ENCODE measurements at regions of chr9 and their contacts with region 1.

Region 1: GRCh38 chr9:132406554-132407122 is at the start of gene TTF1:
- DNase-seq: peak; percentile 91 to 95 (median 94)
- ATAC-seq: peak; percentile 74 to 83 (median 77)
- H3K4me3 ChIP-seq: peak within 1 kb of the TSS; percentile 49 to 99 (median 80)
- H3K27ac ChIP-seq: peak within 1 kb of the TSS; percentile 37 to 91 (median 74)
- H3K4me1 ChIP-seq: peaks cover 0 to 72% (median 44%) of the 10 kb centered on the region in 12 donors
- H3K27me3 ChIP-seq: peaks cover 0 to 27% (median 13%) of the 10 kb centered on the region in 9 donors
- CTCF ChIP-seq: no peak
- POLR2A ChIP-seq: peak in 1 of 2 donors; percentile 40
- total RNA-seq, gene TTF1: 13.0 to 20.3 (median 16.5) TPM

Region 2: DNA sequence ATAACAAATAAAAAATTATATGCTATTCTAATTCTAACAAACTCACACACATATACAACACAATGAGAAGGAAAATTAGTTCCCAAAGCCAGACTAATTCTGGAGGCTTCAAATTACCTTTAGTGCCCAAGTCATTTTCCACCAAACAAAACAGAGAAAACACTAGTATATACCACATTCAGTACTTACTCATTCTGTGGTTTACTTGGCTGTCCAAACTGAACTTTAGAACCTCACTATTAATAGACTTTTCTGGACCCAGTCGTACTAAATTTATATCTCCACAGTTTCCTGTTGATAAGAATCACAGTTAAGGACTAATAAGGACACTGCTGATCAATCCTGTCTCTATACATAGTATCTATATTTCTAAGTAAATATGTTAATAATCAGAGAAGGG is 118.3 kb before region 1 on chr9:
- intact Hi-C with region 1: no loop called
- DNase-seq: no peak
- ATAC-seq: no peak
- H3K4me3 ChIP-seq: no peak overlapping the region
- H3K27ac ChIP-seq: peak overlapping the region in 4 of 12 donors; percentile 4 to 44 (median 7)
- H3K4me1 ChIP-seq: peaks cover 0 to 21% (median 15%) of the 10 kb centered on the region in 12 donors
- H3K27me3 ChIP-seq: no peaks in the 10 kb centered on the region
- CTCF ChIP-seq: no peak
- POLR2A ChIP-seq: no peak

Region 3: GRCh38 chr9:132354637-132355355 is 51.8 kb before region 1 on chr9 and contains the start of gene SETX:
- intact Hi-C with region 1: loop called in 2 of 10 experiments (anchors 5 to 10 kb)
- DNase-seq: peak; percentile 98 to 99 (median 98)
- ATAC-seq: peak; percentile 97 to 99 (median 98)
- H3K4me3 ChIP-seq: peak within 1 kb of the TSS; percentile 67 to 100 (median 92)
- H3K27ac ChIP-seq: peak within 1 kb of the TSS; percentile 67 to 99 (median 94)
- H3K4me1 ChIP-seq: peaks cover 3 to 44% (median 36%) of the 10 kb centered on the region in 12 donors
- H3K27me3 ChIP-seq: no peaks in the 10 kb centered on the region
- CTCF ChIP-seq: peak in 3 of 12 donors; percentile 5 to 26 (median 24)
- POLR2A ChIP-seq: peak; percentile 82 to 96
- total RNA-seq, gene SETX: 19.3 to 42.5 (median 27.8) TPM

Region 4: DNA sequence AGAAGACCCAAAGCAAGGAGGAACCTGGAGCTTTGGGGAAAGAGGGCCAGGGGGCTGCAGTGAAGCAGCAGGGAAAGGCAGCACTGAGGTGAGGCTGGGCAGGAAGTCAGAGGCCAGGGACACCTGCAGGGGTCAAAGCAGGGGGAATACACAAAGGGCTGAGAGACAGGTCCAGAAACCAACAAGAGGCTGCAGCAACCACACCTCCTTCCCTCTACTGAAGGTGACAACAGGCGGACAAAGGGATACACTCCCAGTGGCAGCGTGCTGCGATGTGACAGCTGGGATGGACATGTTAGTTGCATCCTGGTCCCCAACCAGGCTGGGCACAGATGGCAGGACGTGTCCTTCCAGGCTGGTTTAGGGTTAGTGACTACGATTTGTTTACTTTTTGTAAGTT is 15.9 kb after region 1 on chr9:
- intact Hi-C with region 1: no loop called
- DNase-seq: no peak
- ATAC-seq: no peak
- H3K4me3 ChIP-seq: no peak overlapping the region
- H3K27ac ChIP-seq: no peak overlapping the region
- H3K4me1 ChIP-seq: no peaks in the 10 kb centered on the region
- H3K27me3 ChIP-seq: peaks cover 0 to 63% (median 6%) of the 10 kb centered on the region in 9 donors
- CTCF ChIP-seq: no peak
- POLR2A ChIP-seq: no peak

Region 5: DNA sequence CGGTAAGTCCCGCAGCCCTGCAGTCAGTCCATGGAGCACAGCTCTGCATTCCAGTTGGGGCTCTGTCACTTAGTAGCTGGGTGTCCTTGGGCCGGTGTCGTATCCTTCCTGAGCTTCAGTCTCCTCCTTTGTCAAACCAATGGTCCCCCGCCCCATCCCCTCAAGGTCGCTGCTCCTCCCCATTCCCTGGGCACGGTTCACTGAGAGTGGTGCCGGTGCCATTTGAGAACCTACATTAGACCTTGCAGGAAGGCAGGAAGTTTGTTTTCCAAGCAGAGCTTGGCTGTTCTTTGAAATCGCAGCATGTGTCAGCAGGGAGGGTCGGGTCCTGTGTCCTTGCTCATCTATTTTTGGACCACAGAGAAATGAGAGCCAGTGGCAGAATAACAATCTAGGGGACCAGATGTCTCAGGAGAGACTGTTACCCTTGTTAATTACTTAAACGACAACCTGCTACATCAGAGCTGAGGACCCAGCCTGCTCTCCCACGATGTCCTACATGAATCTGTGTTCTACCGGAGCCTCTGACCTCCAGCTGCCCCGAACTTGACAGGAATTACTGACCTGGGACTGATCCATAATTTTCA is 154.1 kb after region 1 on chr9:
- intact Hi-C with region 1: loop called in 1 of 10 experiments (anchors 5 kb)
- DNase-seq: no peak
- ATAC-seq: peak in 3 of 4 donors; percentile 29 to 78 (median 50)
- H3K4me3 ChIP-seq: peak overlapping the region in 1 of 12 donors; percentile 13
- H3K27ac ChIP-seq: peak overlapping the region in 2 of 12 donors; percentile 11 to 27
- H3K4me1 ChIP-seq: peaks cover 0 to 24% (median 4%) of the 10 kb centered on the region in 12 donors
- H3K27me3 ChIP-seq: peaks cover 0 to 10% (median 0%) of the 10 kb centered on the region in 9 donors
- CTCF ChIP-seq: no peak
- POLR2A ChIP-seq: no peak

Region 6: GRCh38 chr9:132651254-132651653 is 244.6 kb after region 1 on chr9:
- intact Hi-C with region 1: loop called in 1 of 10 experiments (anchors 5 kb)
- DNase-seq: no peak
- ATAC-seq: no peak
- H3K4me3 ChIP-seq: no peak overlapping the region
- H3K27ac ChIP-seq: no peak overlapping the region
- H3K4me1 ChIP-seq: no peaks in the 10 kb centered on the region
- H3K27me3 ChIP-seq: no peaks in the 10 kb centered on the region
- CTCF ChIP-seq: peak in 5 of 12 donors; percentile 4 to 33 (median 18)
- POLR2A ChIP-seq: no peak

Region 7: DNA sequence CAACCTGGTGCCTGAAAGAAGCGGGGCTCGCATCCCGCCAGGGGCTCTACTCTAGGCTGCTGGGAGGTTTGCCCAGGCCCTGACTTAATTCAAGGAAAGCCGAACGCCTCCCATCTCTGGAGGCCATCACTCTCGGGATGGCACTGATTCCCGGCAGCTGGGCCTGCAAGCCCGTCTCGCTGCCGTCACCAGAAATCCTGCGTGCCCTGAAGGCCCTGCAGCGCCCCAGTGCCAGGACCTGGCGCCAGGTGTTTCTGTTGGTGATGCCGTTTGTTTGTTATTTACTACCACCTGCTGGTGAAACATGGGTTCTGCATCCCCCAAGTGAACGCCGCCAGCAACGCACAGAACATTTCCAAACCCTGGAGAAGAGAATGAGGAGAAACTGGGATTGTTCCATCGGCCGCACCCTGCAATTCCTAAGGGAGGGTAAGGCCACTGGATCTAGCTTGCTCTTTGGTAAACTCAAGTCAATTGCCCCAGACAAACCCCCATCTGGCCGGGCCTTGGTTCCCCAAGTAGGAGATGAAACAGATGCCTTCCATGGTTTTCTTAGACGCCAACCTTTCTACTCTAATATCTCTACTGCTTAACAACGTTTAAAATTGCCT is 393.5 kb after region 1 on chr9:
- intact Hi-C with region 1: loop called (anchors 1 to 10 kb)
- DNase-seq: peak; percentile 50 to 87 (median 68)
- ATAC-seq: peak; percentile 63 to 82 (median 70)
- H3K4me3 ChIP-seq: no peak overlapping the region
- H3K27ac ChIP-seq: peak overlapping the region in 1 of 12 donors; percentile 62
- H3K4me1 ChIP-seq: peaks cover 0 to 27% (median 15%) of the 10 kb centered on the region in 12 donors
- H3K27me3 ChIP-seq: peaks cover 0 to 12% (median 0%) of the 10 kb centered on the region in 9 donors
- CTCF ChIP-seq: peak; percentile 77 to 90 (median 88)
- POLR2A ChIP-seq: no peak

Measured in heart left ventricle (tissue), 16 donors.